Mammary epithelial cell (primary cell): ENCODE measurements at regions of chr10 and their contacts with region 1.

Region 1: DNA sequence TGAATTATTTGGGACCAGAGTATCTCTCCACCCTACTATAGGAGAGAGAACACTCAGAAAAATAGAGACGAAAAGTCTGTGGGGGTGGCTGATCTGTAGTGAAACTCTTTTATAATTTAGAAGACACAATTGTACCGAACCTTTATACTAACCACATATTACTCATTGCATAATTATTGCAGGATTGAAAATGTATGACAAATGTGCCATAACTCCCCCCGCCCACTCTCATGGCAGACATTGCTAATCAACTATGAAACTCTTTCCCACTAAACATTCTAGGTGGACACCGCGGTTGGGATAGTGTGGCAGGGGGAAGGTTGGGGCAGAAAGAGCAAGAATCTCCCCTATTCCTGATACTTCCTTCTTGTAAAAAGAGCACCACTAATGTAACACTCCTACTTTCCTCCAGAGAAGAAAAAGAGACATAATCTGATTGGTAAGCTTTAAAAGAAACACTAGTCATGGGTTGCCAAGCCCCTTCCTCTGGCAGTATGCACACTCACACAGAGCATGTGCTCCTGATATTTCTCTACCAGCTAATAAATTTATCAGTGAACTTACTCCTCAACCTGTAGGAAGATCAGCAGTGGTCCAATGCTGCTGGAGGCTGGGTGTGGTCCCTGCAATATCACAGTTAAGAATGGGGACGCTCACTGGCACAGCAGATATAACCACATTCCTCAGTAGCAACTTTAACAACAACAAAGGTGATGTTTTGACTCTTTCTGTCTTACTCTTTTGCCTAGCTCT is 18.7 kb upstream of the ARID5B start:
- DNase-seq: peak; percentile 81
- H3K4me3 ChIP-seq: no peak overlapping the region
- H3K27ac ChIP-seq: peak overlapping the region; percentile 74
- H3K4me1 ChIP-seq: peaks cover 10% of the 10 kb centered on the region
- H3K27me3 ChIP-seq: no peaks in the 10 kb centered on the region
- CTCF ChIP-seq: no peak

Region 2: DNA sequence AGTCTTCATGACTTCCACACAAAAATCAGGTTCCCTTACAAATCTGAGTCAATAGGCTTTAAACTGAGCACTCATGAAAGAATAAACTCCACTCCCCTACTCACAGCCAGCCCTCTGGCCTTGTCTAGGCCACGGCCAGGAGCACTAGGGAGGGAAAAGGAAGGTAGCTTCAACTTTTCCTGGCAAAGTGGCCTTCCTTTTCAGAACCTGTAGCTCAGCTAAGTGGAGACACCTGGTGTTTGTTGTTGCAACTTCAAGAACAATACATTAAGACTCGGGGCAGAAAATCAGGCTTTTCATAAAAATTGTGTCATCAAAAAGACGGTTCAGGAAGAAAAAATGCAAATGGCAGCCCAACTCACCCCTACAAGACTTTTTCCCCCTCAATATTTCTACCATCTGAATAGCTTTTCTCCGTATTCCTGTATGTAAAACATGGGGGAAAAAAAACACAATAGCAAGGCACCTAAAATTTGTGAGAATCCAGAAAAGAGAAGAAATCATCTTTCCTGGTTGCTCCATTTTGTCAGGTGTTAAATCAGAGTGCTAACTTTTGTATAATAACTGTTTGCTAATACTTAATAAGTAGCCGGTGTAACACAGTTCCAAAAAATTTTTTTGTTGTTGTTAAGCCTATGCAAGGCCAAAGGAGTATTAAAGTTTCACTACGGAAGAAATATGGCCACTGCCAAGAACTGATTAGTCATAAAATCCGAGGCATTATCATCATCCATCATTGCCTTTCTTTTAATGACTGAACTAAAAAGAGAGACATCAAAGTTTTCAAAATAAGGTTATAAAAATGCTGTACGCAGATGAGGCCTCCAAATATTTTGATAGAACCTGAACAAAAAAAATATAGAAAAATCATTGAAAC is 47.5 kb before region 1 on chr10:
- CTCF ChIA-PET with region 1: no interaction called
- dilution Hi-C with region 1: no loop called
- in situ Hi-C with region 1: no loop called
- intact Hi-C with region 1: loop called (anchors 5 kb)
- DNase-seq: peak; percentile 54
- H3K4me3 ChIP-seq: no peak overlapping the region
- H3K27ac ChIP-seq: peak overlapping the region; percentile 63
- H3K4me1 ChIP-seq: peaks cover 21% of the 10 kb centered on the region
- H3K27me3 ChIP-seq: no peaks in the 10 kb centered on the region
- CTCF ChIP-seq: peak; percentile 38 to 67

Region 3: GRCh38 chr10:61961278-61961677 is 78.5 kb after region 1 on chr10:
- CTCF ChIA-PET with region 1: no interaction called
- dilution Hi-C with region 1: no loop called
- in situ Hi-C with region 1: no loop called
- intact Hi-C with region 1: no loop called
- DNase-seq: no peak
- H3K4me3 ChIP-seq: no peak overlapping the region
- H3K27ac ChIP-seq: no peak overlapping the region
- H3K4me1 ChIP-seq: no peaks in the 10 kb centered on the region
- H3K27me3 ChIP-seq: no peaks in the 10 kb centered on the region
- CTCF ChIP-seq: no peak